Activated CD4-positive, alpha-beta T cell treated with anti-CD3 and anti-CD28 coated beads for 36 hours (primary cell): ENCODE measurements at regions of chr11 and their contacts with region 1.

Region 1: DNA sequence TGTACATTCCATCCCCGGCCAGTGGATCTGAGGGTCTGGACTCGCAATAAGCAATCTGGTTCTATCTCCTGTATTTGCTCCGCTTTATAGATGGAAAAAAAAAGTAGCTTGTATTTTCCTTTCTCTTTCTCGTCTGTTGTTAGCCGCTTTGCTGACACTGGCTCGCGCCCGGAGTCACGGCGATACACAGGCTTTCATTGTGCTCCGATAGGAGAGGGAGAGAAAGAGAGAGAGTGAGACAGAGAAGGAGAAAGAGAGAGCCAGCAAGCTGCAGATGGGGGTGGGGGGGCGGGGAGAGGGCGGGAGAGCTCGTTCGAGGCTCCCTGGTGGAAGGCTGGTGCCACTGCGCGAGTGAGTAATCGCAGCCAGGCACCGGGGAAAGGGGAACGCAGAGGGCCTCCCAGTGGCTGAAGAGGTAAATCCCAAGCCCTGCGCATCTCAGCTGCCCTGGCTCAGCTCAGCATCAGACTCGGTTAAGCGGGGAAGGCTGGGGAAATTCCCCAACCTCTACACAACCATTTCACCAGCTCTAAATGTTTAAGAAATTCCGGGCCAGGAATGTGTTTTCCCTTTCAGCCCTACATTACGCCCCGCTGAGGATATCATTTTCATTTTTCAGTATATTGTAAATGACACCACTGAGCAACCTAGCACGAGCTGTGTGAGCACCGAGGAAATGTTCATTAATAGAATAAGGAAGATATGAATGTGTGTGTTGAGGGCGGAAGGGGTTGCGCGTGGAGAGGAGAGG is at the start of gene MAML2:
- DNase-seq: peak; percentile 96
- ATAC-seq: peak; percentile 85
- H3K4me3 Mint-ChIP-seq: peak within 1 kb of the TSS; percentile 84
- H3K27ac Mint-ChIP-seq: peak within 1 kb of the TSS; percentile 95
- H3K4me1 Mint-ChIP-seq: peaks cover 26% of the 10 kb centered on the region
- H3K27me3 Mint-ChIP-seq: no peaks in the 10 kb centered on the region
- total RNA-seq, gene MAML2: 23.9 to 37.1 TPM

Region 2: DNA sequence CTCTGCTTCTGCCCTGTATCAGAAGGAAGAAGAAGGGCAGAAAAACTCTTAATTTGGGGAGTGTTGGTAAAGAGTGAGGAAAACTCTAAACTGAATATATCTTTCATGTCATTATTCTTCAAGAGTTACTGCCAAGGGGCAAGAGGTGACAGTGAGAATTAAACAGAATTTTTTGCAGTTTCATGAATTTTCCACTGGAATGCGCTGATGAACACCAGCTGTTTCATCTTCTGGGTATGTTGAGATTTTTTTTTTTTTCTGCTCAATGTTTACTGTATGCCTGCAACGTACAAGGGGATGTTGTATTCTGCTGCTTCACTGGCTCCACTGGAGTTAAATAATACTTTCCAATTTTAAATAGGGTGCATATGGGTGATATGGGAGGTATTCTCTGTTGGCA is 671.4 kb before region 1 on chr11:
- CTCF ChIA-PET with region 1: no interaction called
- POLR2A ChIA-PET with region 1: no interaction called
- intact Hi-C with region 1: no loop called
- DNase-seq: no peak
- ATAC-seq: no peak
- H3K4me3 Mint-ChIP-seq: no peak overlapping the region
- H3K27ac Mint-ChIP-seq: no peak overlapping the region
- H3K4me1 Mint-ChIP-seq: peaks cover 31% of the 10 kb centered on the region
- H3K27me3 Mint-ChIP-seq: no peaks in the 10 kb centered on the region

Region 3: GRCh38 chr11:95835768-95836488 is 507.2 kb before region 1 on chr11:
- CTCF ChIA-PET with region 1: interaction called, 6 read pairs
- POLR2A ChIA-PET with region 1: interaction called, 3 read pairs
- intact Hi-C with region 1: loop called (anchors 1 to 5 kb)
- DNase-seq: peak; percentile 69
- ATAC-seq: peak; percentile 87
- H3K4me3 Mint-ChIP-seq: no peak overlapping the region
- H3K27ac Mint-ChIP-seq: no peak overlapping the region
- H3K4me1 Mint-ChIP-seq: peaks cover 6% of the 10 kb centered on the region
- H3K27me3 Mint-ChIP-seq: no peaks in the 10 kb centered on the region

Region 4: DNA sequence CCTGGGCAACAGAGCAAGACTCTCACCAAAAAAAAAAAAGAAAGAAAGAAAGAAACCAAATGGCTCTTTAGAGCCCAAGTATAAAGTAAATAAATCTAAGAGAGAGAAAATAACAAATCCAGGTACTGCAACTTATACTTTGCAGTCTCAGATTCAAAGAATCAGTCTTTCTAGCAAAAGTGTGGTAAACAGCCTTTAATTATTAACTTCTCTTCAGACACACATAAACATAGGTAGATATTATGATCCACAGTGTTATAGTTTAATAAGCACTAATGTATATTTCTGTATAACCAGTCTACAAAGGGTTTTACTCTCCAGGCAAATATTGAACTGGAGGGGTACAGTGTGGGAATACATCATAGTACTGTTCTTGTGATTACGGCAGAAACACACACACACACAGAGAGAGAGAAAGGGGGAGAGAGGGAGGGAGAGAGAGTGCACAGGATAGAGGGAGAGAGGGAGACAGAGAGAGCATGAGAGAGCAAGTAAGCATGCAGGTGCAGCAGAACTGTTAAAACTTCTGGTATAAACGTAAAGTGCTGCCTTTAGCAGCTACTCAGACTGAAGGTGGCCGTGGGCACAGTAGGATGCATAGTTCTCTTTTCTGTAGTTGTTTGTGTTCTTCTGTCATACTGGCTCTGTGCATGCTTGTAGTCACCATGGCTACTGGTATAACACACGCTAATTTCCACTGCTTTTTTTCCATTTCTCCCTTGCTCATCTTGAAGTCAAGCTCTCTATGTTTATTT is 451.5 kb before region 1 on chr11:
- CTCF ChIA-PET with region 1: no interaction called
- POLR2A ChIA-PET with region 1: no interaction called
- intact Hi-C with region 1: no loop called
- DNase-seq: peak; percentile 7
- ATAC-seq: peak; percentile 51
- H3K4me3 Mint-ChIP-seq: no peak overlapping the region
- H3K27ac Mint-ChIP-seq: no peak overlapping the region
- H3K4me1 Mint-ChIP-seq: peaks cover 8% of the 10 kb centered on the region
- H3K27me3 Mint-ChIP-seq: no peaks in the 10 kb centered on the region

Region 5: DNA sequence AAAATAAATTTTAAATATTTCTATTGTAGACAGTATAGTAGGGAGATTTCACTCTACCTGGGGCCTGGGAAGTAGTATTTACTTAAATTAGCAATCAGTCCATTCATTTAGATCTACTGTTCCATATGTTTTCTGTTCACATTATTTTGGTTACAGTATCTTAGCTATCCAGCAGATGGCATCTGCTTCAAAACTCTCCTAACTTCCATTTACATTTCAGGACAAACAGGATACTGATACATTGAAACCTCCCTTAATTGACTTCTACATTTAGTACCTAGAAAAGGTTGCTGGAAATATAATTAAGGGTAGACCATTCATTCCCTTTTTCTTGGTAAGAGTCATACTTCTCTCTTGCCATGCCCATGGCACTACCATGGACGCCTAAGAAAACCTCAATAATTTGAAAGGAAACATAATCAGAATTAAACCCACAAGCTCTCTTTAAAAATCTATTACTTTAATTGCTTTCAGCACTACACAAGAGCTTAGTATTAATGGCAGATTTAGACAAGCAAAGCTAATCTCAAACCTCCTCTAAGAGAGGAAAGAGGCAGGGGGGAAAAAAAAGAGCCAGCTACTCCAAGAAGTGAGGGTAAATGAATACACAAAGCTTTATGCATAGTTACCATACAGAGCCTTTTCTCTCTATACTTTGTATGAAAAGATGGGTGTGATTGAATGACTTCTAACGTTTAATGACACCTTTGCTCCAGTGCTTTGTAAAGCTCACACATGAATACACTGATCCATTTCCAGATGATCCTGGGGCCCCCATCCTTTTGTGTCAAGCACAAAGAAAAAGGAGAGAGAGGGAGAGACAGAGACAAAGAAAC is 288.0 kb before region 1 on chr11:
- CTCF ChIA-PET with region 1: interaction called, 39 read pairs
- POLR2A ChIA-PET with region 1: interaction called, 3 read pairs
- intact Hi-C with region 1: loop called in 1 of 2 experiments (anchors 1 kb)
- DNase-seq: no peak
- ATAC-seq: peak; percentile 20
- H3K4me3 Mint-ChIP-seq: no peak overlapping the region
- H3K27ac Mint-ChIP-seq: peak overlapping the region; percentile 88
- H3K4me1 Mint-ChIP-seq: peaks cover 86% of the 10 kb centered on the region
- H3K27me3 Mint-ChIP-seq: no peaks in the 10 kb centered on the region

Region 6: DNA sequence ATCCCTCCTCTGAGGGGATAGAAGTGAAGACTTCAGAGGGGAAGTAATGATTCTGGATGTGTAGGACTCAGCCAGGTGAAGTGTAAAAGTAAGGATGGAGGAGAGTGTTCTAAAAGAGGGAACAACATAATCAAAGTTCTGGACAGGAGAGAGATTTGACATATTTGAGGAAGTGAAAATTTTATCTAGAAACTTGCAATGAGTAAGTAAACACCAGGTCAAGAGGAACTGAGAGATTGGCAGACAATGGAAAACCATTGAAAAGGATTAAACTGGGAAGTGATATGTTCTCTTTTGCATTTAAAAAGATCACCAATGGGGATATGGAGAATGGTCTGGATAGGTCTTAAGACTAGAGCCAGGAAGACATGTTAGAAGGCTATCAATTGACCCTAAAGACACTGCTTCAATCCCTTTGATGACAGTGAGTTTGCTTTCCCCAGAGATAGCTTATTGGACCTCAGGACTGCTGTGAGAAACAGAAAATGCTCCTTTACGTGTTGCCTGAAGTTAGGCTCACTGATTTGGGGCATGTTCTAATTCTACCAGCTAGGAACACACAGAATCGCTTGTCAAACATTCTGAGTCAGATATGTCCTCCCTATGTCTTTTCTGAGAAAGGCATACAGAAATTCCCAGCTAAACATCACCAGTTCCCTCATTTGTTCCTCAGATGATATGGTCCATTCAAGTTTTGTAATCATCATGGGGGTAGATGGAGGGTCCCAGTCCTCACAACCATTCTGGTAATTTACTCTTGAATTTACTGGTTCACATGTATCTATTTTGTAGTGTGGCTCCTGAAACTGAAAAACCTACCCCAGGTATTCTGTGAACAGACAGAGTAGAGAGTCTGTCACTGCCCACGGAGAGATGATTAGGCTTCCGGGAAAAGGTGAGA is 145.1 kb before region 1 on chr11:
- CTCF ChIA-PET with region 1: interaction called, 15 read pairs
- POLR2A ChIA-PET with region 1: interaction called, 12 read pairs
- intact Hi-C with region 1: loop called in 1 of 2 experiments (anchors 2 kb)
- DNase-seq: no peak
- ATAC-seq: peak; percentile 50
- H3K4me3 Mint-ChIP-seq: peak overlapping the region; percentile 16
- H3K27ac Mint-ChIP-seq: peak overlapping the region; percentile 91
- H3K4me1 Mint-ChIP-seq: peaks cover 90% of the 10 kb centered on the region
- H3K27me3 Mint-ChIP-seq: no peaks in the 10 kb centered on the region

Region 7: GRCh38 chr11:96235751-96236150 is 107.4 kb before region 1 on chr11:
- CTCF ChIA-PET with region 1: interaction called, 38 read pairs
- POLR2A ChIA-PET with region 1: interaction called, 4 read pairs
- intact Hi-C with region 1: no loop called
- DNase-seq: peak; percentile 86
- ATAC-seq: peak; percentile 98
- H3K4me3 Mint-ChIP-seq: peak overlapping the region; percentile 45
- H3K27ac Mint-ChIP-seq: peak overlapping the region; percentile 78
- H3K4me1 Mint-ChIP-seq: peaks cover 53% of the 10 kb centered on the region
- H3K27me3 Mint-ChIP-seq: no peaks in the 10 kb centered on the region

Region 8: DNA sequence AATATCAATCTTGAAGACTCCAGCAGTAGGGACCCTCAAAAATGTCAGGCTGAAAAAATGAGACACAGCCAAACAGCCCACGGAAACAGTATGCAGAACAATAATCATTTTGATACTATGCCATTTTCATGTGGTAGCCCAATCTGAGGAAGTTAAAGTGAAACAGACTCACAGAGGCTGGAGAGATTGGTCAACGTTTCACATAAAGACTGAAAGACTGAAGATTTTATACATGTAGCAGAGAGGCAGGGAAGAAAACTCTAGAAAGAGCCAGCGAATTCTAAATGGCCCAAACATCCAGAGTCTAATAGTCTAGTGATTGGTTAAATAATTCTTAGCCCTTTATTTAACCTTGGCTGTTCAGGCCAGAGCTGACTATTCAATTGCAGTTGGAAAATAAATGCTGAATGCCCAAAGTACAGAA is 49.5 kb before region 1 on chr11:
- CTCF ChIA-PET with region 1: interaction called, 16 read pairs
- POLR2A ChIA-PET with region 1: no interaction called
- intact Hi-C with region 1: loop called (anchors 2 to 5 kb)
- DNase-seq: no peak
- ATAC-seq: peak; percentile 68
- H3K4me3 Mint-ChIP-seq: no peak overlapping the region
- H3K27ac Mint-ChIP-seq: peak overlapping the region; percentile 1
- H3K4me1 Mint-ChIP-seq: peaks cover 77% of the 10 kb centered on the region
- H3K27me3 Mint-ChIP-seq: no peaks in the 10 kb centered on the region

Region 9: GRCh38 chr11:96357794-96358193 is 14.7 kb after region 1 on chr11:
- CTCF ChIA-PET with region 1: interaction called, 13 read pairs
- POLR2A ChIA-PET with region 1: interaction called, 3 read pairs
- intact Hi-C with region 1: no loop called
- DNase-seq: peak; percentile 16
- ATAC-seq: peak; percentile 72
- H3K4me3 Mint-ChIP-seq: no peak overlapping the region
- H3K27ac Mint-ChIP-seq: peak overlapping the region; percentile 34
- H3K4me1 Mint-ChIP-seq: peaks cover 20% of the 10 kb centered on the region
- H3K27me3 Mint-ChIP-seq: no peaks in the 10 kb centered on the region

Region 10: GRCh38 chr11:96567176-96567575 is 224.0 kb after region 1 on chr11:
- CTCF ChIA-PET with region 1: no interaction called
- POLR2A ChIA-PET with region 1: no interaction called
- intact Hi-C with region 1: no loop called
- DNase-seq: no peak
- ATAC-seq: peak; percentile 74
- H3K4me3 Mint-ChIP-seq: no peak overlapping the region
- H3K27ac Mint-ChIP-seq: no peak overlapping the region
- H3K4me1 Mint-ChIP-seq: no peaks in the 10 kb centered on the region
- H3K27me3 Mint-ChIP-seq: no peaks in the 10 kb centered on the region